ENCODE measurements at regions of chr3 and their contacts with region 1.

Region 1: GRCh38 chr3:125374996-125375941 is at the start of gene ZNF148:
- DNase-seq: peak; percentile 98
- ATAC-seq: peak; percentile 100
- total RNA-seq, gene ZNF148: 43.7 TPM

Region 2: DNA sequence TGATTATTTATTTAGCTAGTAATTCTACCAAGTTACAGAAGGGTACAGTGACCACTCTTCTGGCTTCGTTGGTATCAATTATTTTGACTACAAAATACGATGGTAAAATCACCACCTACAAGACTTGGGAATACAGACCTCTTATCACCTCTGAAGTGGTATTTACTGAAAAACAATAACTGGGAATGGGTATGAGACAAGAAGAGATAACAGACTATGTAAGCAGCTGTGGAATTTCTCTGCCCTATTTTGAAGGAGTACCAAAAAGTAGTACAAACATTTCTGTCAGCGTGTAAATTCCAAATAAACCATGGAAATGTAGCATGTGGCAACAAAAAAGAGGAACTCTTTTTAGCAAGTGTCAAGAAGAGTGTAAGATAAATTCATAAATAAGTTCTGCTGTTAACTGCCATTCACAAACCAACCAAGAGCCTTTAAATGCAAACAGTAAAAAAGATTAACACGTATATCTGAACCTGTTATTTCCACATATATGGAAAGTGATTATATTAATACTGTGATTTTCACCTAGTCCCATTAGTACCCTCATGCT is 85.8 kb before region 1 on chr3:
- intact Hi-C with region 1: loop called (anchors 5 kb)
- DNase-seq: no peak
- ATAC-seq: no peak

Region 3: GRCh38 chr3:125351814-125352456 is 23.3 kb before region 1 on chr3:
- intact Hi-C with region 1: no loop called
- DNase-seq: no peak
- ATAC-seq: no peak